Panc1 (cell line): ENCODE measurements at regions of chr19 and their contacts with region 1.

Region 1: DNA sequence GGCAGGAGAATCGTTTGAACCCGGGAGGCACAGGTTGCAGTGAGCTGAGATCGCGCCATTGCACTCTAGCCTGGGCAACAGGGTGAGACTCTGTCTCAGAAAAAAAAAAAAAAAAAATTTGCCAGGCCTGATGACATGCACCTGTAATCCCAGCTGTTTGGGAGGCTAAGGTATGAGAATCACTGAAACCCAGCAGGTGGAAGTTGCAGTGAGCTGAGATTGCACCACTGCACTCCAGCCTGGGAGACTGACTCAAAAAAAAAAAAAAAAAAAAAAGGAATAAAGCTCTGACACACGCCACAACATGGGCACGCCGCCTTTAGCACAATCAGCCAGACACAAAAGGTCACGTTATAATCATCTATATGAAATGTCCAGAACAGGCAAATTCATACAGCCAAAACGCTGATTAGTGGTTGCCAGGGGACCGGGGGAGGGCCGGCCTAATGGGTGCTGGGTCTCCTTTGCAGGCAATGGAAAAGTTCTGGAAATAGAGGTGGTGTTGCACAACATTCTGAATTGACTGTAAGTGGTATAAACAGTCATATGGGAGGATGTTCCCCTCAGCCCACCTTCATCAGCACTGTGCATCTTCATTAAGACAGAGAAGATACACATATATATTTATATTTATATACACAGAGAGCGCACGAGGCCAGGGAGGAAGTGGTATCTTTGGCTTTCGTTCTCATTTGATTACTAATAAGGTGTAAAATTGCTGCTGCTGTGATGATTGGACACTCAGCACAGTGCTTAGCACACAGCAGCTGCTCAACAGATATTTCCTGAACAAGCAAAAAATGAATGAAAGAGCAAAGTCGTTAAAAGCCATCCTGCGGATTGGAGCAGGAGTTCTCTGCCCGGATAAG is 3.8 kb downstream of the HSPBP1 start:
- DNase-seq: no peak
- ATAC-seq: no peak
- H3K4me3 ChIP-seq: no peak overlapping the region
- H3K27ac ChIP-seq: no peak overlapping the region
- H3K4me1 ChIP-seq: peaks cover 11% of the 10 kb centered on the region
- H3K27me3 ChIP-seq: no peaks in the 10 kb centered on the region
- CTCF ChIP-seq: no peak

Region 2: GRCh38 chr19:55117636-55118391 is 158.3 kb before region 1 on chr19 and contains the start of gene PPP1R12C:
- CTCF ChIA-PET with region 1: no interaction called
- POLR2A ChIA-PET with region 1: interaction called, 11 read pairs
- in situ Hi-C with region 1: no loop called
- intact Hi-C with region 1: no loop called
- DNase-seq: peak; percentile 89
- ATAC-seq: peak; percentile 96
- H3K4me3 ChIP-seq: peak within 1 kb of the TSS; percentile 62 to 81
- H3K27ac ChIP-seq: peak within 1 kb of the TSS; percentile 90
- H3K4me1 ChIP-seq: peaks cover 34% of the 10 kb centered on the region
- H3K27me3 ChIP-seq: no peaks in the 10 kb centered on the region
- CTCF ChIP-seq: no peak
- total RNA-seq, gene PPP1R12C: 158 TPM

Region 3: DNA sequence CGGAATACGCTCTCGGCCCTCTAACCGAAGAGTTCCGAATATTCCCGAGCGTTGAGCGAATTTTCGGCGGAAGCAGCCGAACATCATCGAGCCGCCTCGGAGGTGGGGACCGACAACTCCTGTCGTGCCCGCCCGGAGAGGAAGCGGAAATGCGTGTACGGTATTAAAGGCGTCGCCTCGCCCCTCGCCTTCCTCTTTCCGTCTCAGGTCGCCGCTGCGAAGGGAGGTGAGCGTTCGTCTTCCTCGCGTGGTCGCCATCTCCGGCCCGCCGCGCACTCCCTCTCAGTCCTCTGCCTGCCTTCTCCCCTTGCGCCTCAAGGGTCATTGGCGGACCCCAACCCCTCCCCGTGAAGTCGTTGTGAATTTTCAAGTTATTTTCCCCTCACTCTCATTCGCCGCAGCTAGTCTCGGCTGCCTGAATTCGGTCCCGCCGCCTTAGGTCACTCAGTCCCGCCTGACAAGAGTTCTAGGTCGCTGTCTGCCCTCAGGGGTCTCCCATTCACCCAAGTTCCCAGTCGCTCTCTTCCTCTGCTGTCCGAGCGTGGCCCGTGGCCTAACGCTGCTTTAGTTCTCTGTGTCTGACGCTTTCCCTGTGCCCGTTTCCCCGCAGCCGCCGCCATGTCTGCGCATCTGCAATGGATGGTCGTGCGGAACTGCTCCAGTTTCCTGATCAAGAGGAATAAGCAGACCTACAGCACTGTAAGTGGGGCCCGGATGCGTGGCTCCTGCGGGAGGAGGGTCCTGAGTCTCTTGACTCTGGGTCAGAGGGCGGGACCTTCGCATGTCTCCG is 109.8 kb after region 1 on chr19 and contains the start of gene RPL28:
- CTCF ChIA-PET with region 1: no interaction called
- POLR2A ChIA-PET with region 1: no interaction called
- in situ Hi-C with region 1: no loop called
- intact Hi-C with region 1: no loop called
- DNase-seq: peak; percentile 99
- ATAC-seq: peak; percentile 76
- H3K4me3 ChIP-seq: peak within 1 kb of the TSS; percentile 83 to 98
- H3K27ac ChIP-seq: peak within 1 kb of the TSS; percentile 97
- H3K4me1 ChIP-seq: peaks cover 45% of the 10 kb centered on the region
- H3K27me3 ChIP-seq: no peaks in the 10 kb centered on the region
- CTCF ChIP-seq: no peak
- total RNA-seq, gene RPL28: 2,154 TPM